HEK293 (cell line): ENCODE measurements at regions of chr12 and their contacts with region 1.

Region 1: GRCh38 chr12:49098035-49098451 is 3.4 kb upstream of the DHH start:
- H3K4me3 ChIP-seq: no peak overlapping the region
- H3K27ac ChIP-seq: no peak overlapping the region
- H3K4me1 ChIP-seq: no peaks in the 10 kb centered on the region
- CTCF ChIP-seq: peak; percentile 67

Region 2: DNA sequence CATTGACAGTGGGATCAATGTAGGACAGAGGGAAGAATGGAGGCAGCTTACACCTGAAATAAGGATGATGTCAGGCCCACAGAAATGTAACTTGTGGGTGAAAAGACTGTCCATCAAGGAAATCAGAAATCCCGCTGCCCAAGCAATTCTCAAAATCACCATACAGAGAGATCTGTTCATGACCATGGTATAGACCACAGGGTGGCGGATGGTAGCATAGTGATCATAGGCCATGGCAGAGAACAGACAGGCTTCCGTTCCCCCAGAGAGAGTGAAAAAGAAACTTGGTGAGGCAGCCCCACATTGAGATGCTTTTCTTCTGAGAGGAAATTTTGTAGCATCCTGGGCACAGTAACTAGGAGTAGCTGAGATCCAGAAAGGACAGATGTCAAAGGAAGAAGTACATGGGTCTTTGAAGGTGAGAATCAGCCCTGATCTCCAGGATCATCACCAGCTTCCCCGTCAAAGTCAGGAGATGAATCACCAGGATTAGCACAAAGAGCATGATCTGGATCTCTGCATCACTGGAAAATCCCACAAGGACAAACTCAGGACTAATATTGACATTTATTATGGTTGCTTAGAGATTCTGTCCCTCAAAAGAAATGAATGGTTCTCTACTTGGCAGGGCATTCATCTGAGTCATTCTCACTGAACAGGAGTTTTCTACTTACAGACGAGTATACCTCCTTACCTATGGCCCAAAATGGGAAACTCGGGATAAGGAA is 741.8 kb before region 1 on chr12:
- CTCF ChIA-PET with region 1: no interaction called
- POLR2A ChIA-PET with region 1: no interaction called
- H3K4me3 ChIP-seq: no peak overlapping the region
- H3K27ac ChIP-seq: no peak overlapping the region
- H3K4me1 ChIP-seq: no peaks in the 10 kb centered on the region
- CTCF ChIP-seq: no peak

Region 3: DNA sequence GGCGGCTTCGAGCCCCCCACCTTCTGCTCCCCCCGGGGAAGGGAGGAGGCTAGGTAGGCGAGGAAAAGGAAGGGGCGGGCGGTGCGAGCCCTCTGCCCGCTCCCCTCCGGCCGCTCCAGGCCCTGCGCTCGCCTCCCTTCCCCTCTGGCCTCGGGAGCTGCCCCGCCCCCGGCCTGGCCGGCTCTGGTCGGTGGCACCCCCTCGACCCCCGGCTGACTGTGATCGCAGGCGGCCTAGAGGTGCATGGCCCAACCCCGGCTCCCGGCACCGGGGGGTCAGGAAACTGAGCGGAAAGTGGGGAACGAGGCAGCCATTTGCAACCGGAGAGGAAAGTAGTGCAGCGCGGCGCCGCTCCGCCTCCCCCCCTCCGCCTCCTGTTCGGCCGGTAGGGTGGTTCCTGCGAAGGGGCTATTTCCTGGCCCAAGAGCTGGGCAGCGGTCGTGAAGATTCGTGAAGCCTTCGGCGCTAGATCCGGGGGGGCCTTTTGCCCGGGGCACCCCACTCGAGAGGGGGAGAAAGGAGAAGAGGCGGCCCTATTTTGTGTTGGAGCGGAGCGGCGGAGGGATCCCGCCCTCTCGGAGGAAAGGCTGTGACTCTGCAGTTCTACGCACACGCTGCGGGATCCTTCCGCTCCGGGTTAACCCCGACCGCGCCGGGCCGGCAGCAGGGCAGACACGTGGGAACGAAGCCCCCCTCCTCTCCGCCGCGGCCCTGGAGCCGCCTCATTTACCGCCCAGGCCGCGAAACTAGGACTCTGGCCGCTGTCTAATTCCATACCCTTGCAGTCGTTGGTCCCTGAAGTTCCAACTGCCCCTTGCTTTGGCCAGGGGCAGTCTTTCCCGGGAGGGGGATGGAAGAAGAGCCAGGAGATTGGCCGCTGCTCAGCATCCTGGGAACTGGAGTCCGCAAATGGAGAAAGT is 37.5 kb before region 1 on chr12 and contains the start of gene KMT2D:
- CTCF ChIA-PET with region 1: interaction called, 111 read pairs
- POLR2A ChIA-PET with region 1: interaction called, 11 read pairs
- H3K4me3 ChIP-seq: peak within 1 kb of the TSS; percentile 95
- H3K27ac ChIP-seq: peak within 1 kb of the TSS; percentile 93
- H3K4me1 ChIP-seq: peaks cover 11% of the 10 kb centered on the region
- CTCF ChIP-seq: peak; percentile 94

Region 4: DNA sequence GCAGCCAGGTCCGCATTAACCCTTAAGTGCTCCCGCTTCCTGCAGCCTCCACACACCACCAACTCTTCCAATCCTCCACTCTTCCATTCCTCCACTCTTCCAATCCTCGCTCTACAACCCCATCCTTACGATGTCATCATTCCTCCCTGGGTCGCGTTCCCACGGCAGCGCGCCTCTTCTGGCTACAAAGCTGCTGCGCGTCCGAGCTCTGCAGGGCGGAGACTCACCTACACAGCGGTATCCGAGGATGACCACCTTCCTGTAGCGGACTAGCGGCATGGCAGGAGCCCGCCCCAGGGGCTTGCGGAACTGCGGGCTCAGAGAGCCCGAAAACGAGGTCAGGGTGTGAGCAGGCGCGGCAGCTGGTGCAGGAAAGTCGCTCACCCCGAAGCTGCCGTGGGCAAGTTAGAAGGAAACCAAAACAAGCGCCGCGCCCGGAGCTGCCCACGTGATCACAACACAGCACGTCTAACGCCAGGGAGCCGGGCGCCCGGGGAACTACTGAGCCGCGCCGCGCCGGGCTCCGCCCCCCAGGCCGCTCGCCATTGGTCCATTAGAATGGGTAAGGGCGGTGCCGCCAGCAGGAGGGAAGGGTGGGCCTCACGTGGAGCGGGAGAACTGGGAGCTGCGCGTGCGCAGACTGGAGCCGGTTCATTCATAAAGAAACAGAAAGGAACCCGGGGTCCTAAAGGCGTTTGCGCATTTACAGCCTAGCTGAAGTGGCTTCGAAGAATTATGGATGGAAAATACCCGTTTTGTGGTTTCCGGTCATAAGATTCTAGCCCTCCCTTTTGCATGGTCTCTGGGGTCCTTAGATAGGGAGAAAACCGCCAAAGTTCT is 28.3 kb before region 1 on chr12 and contains the start of gene RHEBL1:
- CTCF ChIA-PET with region 1: interaction called, 111 read pairs
- POLR2A ChIA-PET with region 1: interaction called, 11 read pairs
- H3K4me3 ChIP-seq: peak within 1 kb of the TSS; percentile 74
- H3K27ac ChIP-seq: peak within 1 kb of the TSS; percentile 34; the same call in 1 of the 2 replicates
- H3K4me1 ChIP-seq: peaks cover 4% of the 10 kb centered on the region
- CTCF ChIP-seq: peak; percentile 93

Region 5: DNA sequence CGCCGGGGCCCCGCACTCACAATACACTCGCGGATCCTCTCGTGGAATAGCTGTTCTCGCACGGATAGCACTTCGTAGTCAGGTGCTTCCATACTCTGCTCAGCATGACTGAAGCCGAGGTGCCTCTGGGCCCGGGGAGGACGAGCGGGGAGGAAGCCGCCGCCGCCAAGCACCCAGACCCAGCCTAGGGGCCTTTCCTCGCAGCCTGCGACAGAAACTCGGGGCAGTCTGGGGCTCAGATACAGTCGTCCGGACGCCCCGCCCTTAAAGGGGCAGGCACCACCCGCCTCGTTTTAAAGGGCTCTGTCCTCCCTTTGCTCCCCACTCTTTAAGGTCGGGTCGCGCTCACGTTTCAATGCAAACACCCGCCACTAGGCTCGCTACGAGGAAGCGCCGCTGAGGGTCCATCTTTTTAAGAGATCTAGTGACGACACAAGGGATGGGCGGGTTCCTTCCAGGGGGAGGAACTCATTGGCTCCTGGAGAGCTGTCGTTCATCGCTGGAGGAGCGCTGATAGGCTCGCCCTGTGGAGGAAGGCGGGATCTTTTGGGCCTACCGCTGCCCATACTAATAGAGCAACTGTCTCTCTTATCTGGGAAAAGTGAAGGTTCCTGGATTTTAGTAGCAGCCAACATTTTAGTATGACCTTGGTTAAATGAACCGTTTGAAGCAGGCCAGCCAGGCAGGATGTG is 12.6 kb after region 1 on chr12 and contains the start of gene LMBR1L:
- CTCF ChIA-PET with region 1: interaction called, 37 read pairs
- POLR2A ChIA-PET with region 1: interaction called, 16 read pairs
- H3K4me3 ChIP-seq: peak within 1 kb of the TSS; percentile 98
- H3K27ac ChIP-seq: peak within 1 kb of the TSS; percentile 84
- H3K4me1 ChIP-seq: peaks cover 10% of the 10 kb centered on the region
- CTCF ChIP-seq: peak; percentile 65; the same call in 1 of the 2 replicates

Region 6: DNA sequence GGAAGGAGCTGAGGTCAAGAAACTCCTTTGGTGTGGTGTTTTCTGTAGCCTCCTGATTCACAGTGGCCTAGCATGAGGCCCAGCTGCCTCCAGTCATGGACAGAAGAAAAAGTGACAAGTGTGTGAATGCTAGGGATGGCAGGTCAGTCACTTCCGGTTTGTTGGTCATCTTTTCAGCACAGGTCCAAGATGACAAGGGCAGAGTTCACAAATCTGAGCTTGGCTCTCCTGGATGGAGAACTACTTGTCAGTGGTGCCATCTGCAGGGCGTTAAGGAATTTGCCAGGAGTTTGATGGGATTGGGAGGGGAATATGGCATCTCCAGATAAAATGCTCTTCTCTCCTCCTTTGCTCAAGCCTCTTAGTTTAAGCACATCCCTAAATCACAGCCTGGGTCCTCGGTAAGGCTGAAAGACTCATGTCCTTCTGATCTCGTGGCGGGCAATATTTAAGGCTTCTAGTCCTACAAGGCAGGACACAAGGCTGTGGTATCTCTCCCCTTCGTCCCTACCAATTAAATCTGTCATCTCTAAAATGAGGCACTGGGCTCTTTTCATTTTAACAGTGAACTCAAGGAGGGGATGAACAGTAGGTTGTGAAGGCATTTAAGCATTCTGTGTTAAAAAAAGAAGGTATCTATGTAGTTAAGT is 23.1 kb after region 1 on chr12:
- CTCF ChIA-PET with region 1: interaction called, 15 read pairs
- POLR2A ChIA-PET with region 1: no interaction called
- H3K4me3 ChIP-seq: no peak overlapping the region
- H3K27ac ChIP-seq: no peak overlapping the region
- H3K4me1 ChIP-seq: no peaks in the 10 kb centered on the region
- CTCF ChIP-seq: peak; percentile 51; the same call in 1 of the 2 replicates